ENCODE measurements at regions of chr13 and their contacts with region 1.

Region 1: DNA sequence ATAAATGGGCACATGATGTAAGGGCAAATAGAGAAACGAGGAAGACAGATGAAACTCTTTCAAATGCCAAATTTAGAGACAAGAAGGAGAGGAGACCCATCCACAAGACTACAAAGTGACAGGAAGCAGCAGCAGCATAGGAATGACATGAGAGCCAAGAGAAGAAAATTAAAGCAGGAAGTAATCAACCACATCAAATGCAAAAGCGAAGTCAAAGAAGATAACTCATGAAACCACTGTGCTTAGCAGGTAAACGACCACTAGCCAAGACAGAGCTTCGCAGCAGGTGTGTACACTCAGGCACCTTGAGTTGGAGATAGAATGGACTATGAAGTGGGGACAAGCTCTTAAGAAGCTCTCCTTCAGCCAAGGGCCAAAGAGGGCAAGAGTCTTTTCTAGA is 64.1 kb downstream of the KLF12 start:
- DNase-seq: peak in 10 of 14 experiments; percentile 6 to 86 (median 33)
- ATAC-seq: peak; percentile 85
- H3K4me3 ChIP-seq: peak overlapping the region; percentile 1
- H3K4me3 Mint-ChIP-seq: peak overlapping the region; percentile 73
- H3K27ac ChIP-seq: peak overlapping the region; percentile 17 to 36
- H3K27ac Mint-ChIP-seq: peak overlapping the region; percentile 80
- H3K4me1 ChIP-seq: peaks cover 55% of the 10 kb centered on the region
- H3K4me1 Mint-ChIP-seq: peaks cover 83% of the 10 kb centered on the region
- H3K27me3 ChIP-seq: no peaks in the 10 kb centered on the region
- H3K27me3 Mint-ChIP-seq: no peaks in the 10 kb centered on the region
- CTCF ChIP-seq: no peak

Region 2: DNA sequence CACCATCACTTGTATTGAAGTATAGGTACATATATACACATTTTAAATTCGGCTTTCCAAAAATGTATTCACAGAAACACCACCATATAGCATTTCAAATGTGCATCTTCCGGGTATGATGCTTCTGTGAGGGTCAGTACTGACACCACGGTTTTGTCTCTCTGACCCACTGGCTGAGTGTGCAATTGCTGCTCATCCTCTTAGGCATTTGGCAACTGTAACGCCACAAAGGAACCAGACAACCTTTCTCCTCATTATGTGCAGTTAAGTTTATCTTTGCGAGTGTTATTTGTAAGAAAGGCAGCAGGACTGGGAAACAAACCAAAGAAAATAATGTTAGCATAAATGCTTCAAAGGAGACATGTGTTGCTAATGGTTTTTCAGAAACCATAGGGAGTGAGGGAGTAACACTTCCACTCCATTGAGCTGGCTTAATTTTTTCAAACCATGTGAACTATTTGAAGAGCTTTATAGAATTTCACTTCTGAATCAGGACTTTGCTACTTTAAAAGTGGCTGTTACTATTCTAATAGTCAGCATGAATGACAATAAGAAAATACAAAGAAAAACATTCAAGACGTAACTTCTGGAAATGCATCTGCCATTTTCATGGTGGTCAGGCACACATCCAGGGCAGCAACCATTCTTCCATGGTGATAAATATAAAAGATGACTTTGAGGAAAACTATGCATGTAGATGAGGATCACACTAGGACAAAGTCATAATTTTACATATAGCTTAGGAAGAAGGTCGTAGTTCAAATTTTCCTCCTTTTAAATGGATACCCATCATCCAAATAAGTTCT is 1765.9 kb before region 1 on chr13:
- CTCF ChIA-PET with region 1: no interaction called
- POLR2A ChIA-PET with region 1: no interaction called
- intact Hi-C with region 1: no loop called
- DNase-seq: no peak
- ATAC-seq: no peak
- H3K4me3 ChIP-seq: no peak overlapping the region
- H3K4me3 Mint-ChIP-seq: no peak overlapping the region
- H3K27ac ChIP-seq: no peak overlapping the region
- H3K27ac Mint-ChIP-seq: no peak overlapping the region
- H3K4me1 ChIP-seq: no peaks in the 10 kb centered on the region
- H3K4me1 Mint-ChIP-seq: no peaks in the 10 kb centered on the region
- H3K27me3 ChIP-seq: no peaks in the 10 kb centered on the region
- H3K27me3 Mint-ChIP-seq: no peaks in the 10 kb centered on the region
- CTCF ChIP-seq: no peak

Region 3: GRCh38 chr13:74026753-74027152 is 43.3 kb before region 1 on chr13:
- CTCF ChIA-PET with region 1: no interaction called
- POLR2A ChIA-PET with region 1: interaction called, 6 read pairs
- intact Hi-C with region 1: loop called in 1 of 2 experiments (anchors 2 kb)
- DNase-seq: peak; percentile 44 to 88 (median 66)
- ATAC-seq: peak; percentile 95
- H3K4me3 ChIP-seq: peak overlapping the region; percentile 29
- H3K4me3 Mint-ChIP-seq: peak overlapping the region; percentile 82
- H3K27ac ChIP-seq: peak overlapping the region; percentile 66 to 78
- H3K27ac Mint-ChIP-seq: peak overlapping the region; percentile 89
- H3K4me1 ChIP-seq: peaks cover 11% of the 10 kb centered on the region
- H3K4me1 Mint-ChIP-seq: peaks cover 90% of the 10 kb centered on the region
- H3K27me3 ChIP-seq: no peaks in the 10 kb centered on the region
- H3K27me3 Mint-ChIP-seq: no peaks in the 10 kb centered on the region
- CTCF ChIP-seq: no peak

Region 4: DNA sequence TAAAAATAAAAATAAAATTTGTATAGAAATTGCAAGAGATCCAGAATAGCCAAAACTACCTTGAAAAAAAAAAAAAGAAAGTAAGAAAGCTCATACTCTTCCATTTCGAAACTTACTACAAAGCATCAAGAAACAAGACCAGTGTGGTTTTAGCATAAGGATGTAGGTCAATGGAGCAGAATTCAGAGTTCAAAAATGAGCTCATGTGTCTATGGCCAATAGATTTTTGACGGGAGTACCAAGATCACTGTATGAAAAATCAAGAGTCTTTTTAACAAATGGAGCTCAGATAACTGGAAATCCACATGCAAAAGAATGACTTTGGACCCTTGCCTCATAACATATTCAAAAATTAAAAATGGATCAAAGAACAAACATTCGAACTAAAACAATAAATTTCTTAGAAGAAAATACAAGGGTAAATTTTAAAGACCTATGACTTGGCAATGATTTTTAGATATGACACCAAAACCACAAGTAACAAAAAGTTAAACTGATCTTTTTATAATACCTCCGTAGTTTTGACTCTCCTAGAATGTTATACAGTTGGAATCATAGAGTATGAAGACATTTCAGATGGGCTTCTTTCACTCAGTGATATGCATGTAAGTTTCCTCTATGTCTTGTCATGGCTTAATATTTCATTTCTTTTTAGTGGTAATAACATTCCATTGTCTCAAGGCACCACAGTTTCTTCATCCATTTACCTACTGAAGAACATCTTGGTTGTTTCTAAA is 21.0 kb after region 1 on chr13:
- CTCF ChIA-PET with region 1: no interaction called
- POLR2A ChIA-PET with region 1: interaction called, 5 read pairs
- intact Hi-C with region 1: loop called in 1 of 2 experiments (anchors 2 kb)
- DNase-seq: peak in 3 of 14 experiments; percentile 51 to 62 (median 52)
- ATAC-seq: peak; percentile 67
- H3K4me3 ChIP-seq: no peak overlapping the region
- H3K4me3 Mint-ChIP-seq: peak overlapping the region; percentile 64
- H3K27ac ChIP-seq: no peak overlapping the region
- H3K27ac Mint-ChIP-seq: peak overlapping the region; percentile 61
- H3K4me1 ChIP-seq: peaks cover 23% of the 10 kb centered on the region
- H3K4me1 Mint-ChIP-seq: peaks cover 72% of the 10 kb centered on the region
- H3K27me3 ChIP-seq: no peaks in the 10 kb centered on the region
- H3K27me3 Mint-ChIP-seq: no peaks in the 10 kb centered on the region
- CTCF ChIP-seq: no peak

Region 5: DNA sequence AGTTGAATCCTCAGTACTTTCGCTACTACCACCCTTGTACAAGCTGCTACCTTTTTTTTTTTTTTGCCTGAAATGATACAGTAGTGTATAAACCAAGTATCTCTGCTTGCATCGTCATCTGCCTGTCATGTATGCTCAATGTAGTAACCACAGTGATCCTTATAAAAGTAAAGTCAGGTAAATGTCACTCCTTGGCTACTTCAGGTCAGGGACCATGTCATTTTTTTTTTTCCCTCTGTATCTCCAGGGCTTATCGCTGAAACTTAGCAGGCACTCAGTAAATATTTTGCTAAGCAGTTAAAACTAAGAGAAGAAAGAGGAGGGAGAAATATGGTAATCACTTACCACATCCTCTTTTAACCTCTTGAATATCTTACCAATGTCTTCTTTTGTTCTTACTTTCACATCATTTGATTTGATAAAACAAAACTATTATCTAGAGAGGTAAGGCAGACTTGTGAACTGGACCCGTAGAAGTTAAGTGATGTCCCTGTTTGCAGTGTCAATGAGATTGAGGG is 161.0 kb after region 1 on chr13:
- CTCF ChIA-PET with region 1: no interaction called
- POLR2A ChIA-PET with region 1: no interaction called
- intact Hi-C with region 1: loop called in 1 of 2 experiments (anchors 5 kb)
- DNase-seq: peak in 4 of 14 experiments; percentile 14 to 79 (median 52)
- ATAC-seq: peak; percentile 88
- H3K4me3 ChIP-seq: peak overlapping the region; percentile 56
- H3K4me3 Mint-ChIP-seq: peak overlapping the region; percentile 79
- H3K27ac ChIP-seq: peak overlapping the region; percentile 15 to 38
- H3K27ac Mint-ChIP-seq: peak overlapping the region; percentile 90
- H3K4me1 ChIP-seq: peaks cover 17% of the 10 kb centered on the region
- H3K4me1 Mint-ChIP-seq: peaks cover 51% of the 10 kb centered on the region
- H3K27me3 ChIP-seq: no peaks in the 10 kb centered on the region
- H3K27me3 Mint-ChIP-seq: no peaks in the 10 kb centered on the region
- CTCF ChIP-seq: no peak

Region 6: DNA sequence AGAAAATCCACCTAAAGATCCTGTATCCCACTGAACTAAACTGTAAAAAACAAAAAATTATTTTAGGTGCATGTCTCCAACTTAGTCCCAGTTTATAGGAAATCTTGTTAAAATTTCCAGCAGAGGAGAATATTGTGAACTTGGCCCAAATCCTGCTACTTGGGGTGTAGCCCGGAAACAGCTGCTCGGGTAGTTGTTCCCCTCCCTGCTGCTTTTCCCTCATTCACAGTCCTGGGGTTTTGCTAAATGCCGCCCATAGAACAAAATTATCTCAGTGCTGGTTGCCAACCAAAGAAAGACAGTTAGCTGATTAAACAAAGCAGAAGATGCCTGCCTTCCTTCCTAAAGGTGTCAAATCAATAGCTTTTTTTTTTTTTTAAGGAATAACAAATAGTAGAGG is 394.6 kb after region 1 on chr13:
- CTCF ChIA-PET with region 1: no interaction called
- POLR2A ChIA-PET with region 1: no interaction called
- intact Hi-C with region 1: no loop called
- DNase-seq: no peak
- ATAC-seq: no peak
- H3K4me3 ChIP-seq: no peak overlapping the region
- H3K4me3 Mint-ChIP-seq: no peak overlapping the region
- H3K27ac ChIP-seq: no peak overlapping the region
- H3K27ac Mint-ChIP-seq: no peak overlapping the region
- H3K4me1 ChIP-seq: no peaks in the 10 kb centered on the region
- H3K4me1 Mint-ChIP-seq: no peaks in the 10 kb centered on the region
- H3K27me3 ChIP-seq: no peaks in the 10 kb centered on the region
- H3K27me3 Mint-ChIP-seq: peaks cover 32% of the 10 kb centered on the region
- CTCF ChIP-seq: no peak